Activated T-helper 1 cell treated with anti-CD3 and anti-CD28 coated beads, Interleukin-12 subunit alpha, Interleukin-12 subunit beta, Interleukin-2, Interleukin-4 antibody, amounts not matched to agents 30 ng/mL and 10 ng/mL and 1 ng/mL, durations not matched to agents 14 hours and 24 hours and 36 hours (primary cell): ENCODE measurements at regions of chr22 and their contacts with region 1.

Region 1: DNA sequence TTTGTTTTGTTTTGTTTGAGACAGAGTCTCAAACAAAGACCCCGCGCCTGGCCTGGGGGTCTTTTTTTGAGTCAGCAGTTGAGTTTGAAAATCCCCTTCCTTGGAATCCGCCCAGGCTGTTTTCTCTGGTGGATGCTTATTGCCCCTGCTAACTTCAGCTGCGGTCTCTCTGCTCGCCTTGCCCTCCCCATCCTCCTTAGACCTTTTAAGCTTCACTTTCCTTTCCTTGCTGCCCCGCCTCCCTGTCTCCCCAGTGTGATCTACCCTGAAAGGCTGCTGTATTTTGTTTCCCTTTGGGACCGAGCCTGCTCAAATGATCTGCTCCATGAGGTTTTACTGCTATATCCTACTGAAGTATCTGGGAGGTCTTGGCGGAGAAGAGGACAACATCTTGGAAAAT is 2.5 kb downstream of the USP18 start:
- DNase-seq: peak; percentile 41
- H3K4me3 Mint-ChIP-seq: peak overlapping the region; percentile 91
- H3K27ac Mint-ChIP-seq: peak overlapping the region; percentile 87
- H3K4me1 Mint-ChIP-seq: peaks cover 51% of the 10 kb centered on the region
- H3K27me3 Mint-ChIP-seq: no peaks in the 10 kb centered on the region

Region 2: DNA sequence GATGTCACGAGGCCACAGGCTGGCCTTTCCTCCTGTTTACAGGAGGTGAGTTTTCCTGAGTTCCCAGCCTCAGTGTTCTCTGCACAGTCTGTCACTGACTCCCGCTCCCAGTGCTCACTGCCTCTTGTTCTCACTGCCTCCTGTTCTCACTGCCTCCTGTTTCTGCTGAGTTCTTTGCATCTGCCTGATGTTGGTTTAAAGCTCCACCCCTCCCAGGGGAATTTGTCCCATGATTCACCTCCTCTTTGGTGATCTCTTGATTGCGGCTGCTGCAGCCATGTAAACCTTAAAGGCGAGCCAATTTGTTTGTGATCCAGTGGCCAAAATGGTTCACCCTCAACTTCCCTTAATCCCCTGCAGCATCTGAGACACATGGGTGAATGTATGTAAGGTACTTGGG is 48.0 kb before region 1 on chr22:
- intact Hi-C with region 1: loop called (anchors 2 kb)
- DNase-seq: no peak
- H3K4me3 Mint-ChIP-seq: no peak overlapping the region
- H3K27ac Mint-ChIP-seq: peak overlapping the region; percentile 56
- H3K4me1 Mint-ChIP-seq: peaks cover 30% of the 10 kb centered on the region
- H3K27me3 Mint-ChIP-seq: peaks cover 15% of the 10 kb centered on the region